Heart left ventricle (tissue), 16 donors: ENCODE measurements at regions of chr12 and their contacts with region 1.

Region 1: DNA sequence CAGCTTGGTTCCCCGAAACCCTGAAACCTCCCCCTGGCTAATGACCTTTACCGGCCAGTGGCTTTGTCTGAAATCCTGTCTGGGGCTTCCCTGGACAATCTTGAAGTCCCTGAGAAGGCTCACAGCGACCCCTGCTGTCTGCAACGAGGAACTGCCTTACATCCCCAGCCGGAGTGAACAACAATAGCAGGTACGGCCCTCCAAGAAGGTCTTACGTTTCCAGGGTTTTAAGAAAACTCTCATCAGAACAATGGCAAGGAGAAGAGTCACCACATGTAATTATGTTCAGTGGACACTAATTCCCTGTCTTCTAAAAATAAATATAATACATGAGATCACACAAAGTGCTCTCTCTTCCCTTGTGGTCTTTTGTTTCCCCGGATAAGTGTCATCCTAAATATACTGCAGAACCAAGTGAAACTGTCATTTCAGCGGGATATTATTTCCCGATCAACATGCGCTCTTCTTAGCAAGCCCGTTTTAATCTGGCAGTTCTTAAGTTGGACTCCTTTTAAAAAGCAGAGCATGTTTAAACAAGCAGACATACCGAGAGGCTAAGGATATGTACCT is 53.3 kb downstream of the RBM19 start:
- DNase-seq: peak in 4 of 5 donors; percentile 46 to 59 (median 52)
- ATAC-seq: peak in 3 of 4 donors; percentile 59 to 81 (median 74)
- H3K4me3 ChIP-seq: no peak overlapping the region
- H3K27ac ChIP-seq: no peak overlapping the region
- H3K4me1 ChIP-seq: no peaks in the 10 kb centered on the region
- H3K27me3 ChIP-seq: no peaks in the 10 kb centered on the region
- CTCF ChIP-seq: peak; percentile 59 to 88 (median 82)
- POLR2A ChIP-seq: no peak

Region 2: DNA sequence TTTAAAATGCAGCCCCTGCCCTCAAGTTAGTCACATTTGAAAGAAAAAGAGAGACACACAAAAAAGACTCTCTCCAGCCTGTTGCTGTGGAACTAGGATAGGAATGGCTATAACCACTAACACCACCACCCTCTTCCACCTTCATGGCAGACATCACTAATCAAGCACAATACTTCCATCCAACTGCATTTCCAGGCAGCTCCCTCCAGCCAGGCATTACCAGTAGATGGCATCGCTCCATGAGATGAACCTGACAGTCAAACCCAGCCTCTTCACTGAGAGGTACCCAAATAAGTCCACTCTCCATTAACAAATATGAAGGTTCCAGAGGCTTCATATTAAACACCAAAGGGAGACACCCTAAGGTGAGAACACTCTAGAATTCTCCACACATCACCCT is 602.4 kb before region 1 on chr12:
- intact Hi-C with region 1: loop called in 3 of 10 experiments (anchors 5 to 10 kb)
- DNase-seq: no peak
- ATAC-seq: no peak
- H3K4me3 ChIP-seq: no peak overlapping the region
- H3K27ac ChIP-seq: no peak overlapping the region
- H3K4me1 ChIP-seq: peaks cover 0 to 4% (median 0%) of the 10 kb centered on the region in 12 donors
- H3K27me3 ChIP-seq: no peaks in the 10 kb centered on the region
- CTCF ChIP-seq: no peak
- POLR2A ChIP-seq: no peak

Region 3: DNA sequence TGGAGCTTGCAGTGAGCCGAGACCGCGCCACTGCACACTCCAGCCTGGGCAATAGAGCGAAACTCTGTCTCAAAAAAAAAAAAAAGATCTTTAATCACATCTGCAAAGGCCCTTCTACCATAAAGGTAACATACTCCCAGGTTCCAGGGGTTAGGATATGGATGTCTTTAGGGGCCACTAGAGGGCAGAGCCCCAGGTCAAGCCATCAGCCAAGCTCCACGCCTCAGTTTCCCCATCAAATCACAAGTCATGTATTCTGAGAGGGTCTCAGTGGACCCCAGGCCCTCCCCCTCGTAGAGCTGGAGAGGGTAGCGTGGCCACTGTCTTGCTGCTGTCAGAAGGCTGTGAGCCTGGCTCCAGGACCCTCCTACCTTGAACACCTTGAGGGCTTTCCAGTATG is 596.7 kb before region 1 on chr12:
- intact Hi-C with region 1: loop called in 3 of 10 experiments (anchors 5 to 10 kb)
- DNase-seq: no peak
- ATAC-seq: no peak
- H3K4me3 ChIP-seq: no peak overlapping the region
- H3K27ac ChIP-seq: no peak overlapping the region
- H3K4me1 ChIP-seq: peaks cover 0 to 4% (median 0%) of the 10 kb centered on the region in 12 donors
- H3K27me3 ChIP-seq: no peaks in the 10 kb centered on the region
- CTCF ChIP-seq: no peak
- POLR2A ChIP-seq: no peak

Region 4: GRCh38 chr12:113439606-113440030 is 473.2 kb before region 1 on chr12:
- intact Hi-C with region 1: loop called in 3 of 10 experiments (anchors 2 to 10 kb)
- DNase-seq: no peak
- ATAC-seq: peak in 3 of 4 donors; percentile 34 to 59 (median 38)
- H3K4me3 ChIP-seq: no peak overlapping the region
- H3K27ac ChIP-seq: no peak overlapping the region
- H3K4me1 ChIP-seq: no peaks in the 10 kb centered on the region
- H3K27me3 ChIP-seq: peaks cover 0 to 42% (median 4%) of the 10 kb centered on the region in 9 donors
- CTCF ChIP-seq: peak; percentile 41 to 66 (median 58)
- POLR2A ChIP-seq: no peak

Region 5: GRCh38 chr12:113462117-113462774 is 450.6 kb before region 1 on chr12:
- intact Hi-C with region 1: loop called in 9 of 10 experiments (anchors 1 to 5 kb)
- DNase-seq: peak; percentile 69 to 87 (median 76)
- ATAC-seq: peak; percentile 55 to 92 (median 86)
- H3K4me3 ChIP-seq: peak overlapping the region in 9 of 12 donors; percentile 20 to 36 (median 31)
- H3K27ac ChIP-seq: no peak overlapping the region
- H3K4me1 ChIP-seq: peaks cover 0 to 45% (median 28%) of the 10 kb centered on the region in 12 donors
- H3K27me3 ChIP-seq: peaks cover 46 to 92% (median 67%) of the 10 kb centered on the region in 9 donors
- CTCF ChIP-seq: peak; percentile 71 to 90 (median 81)
- POLR2A ChIP-seq: no peak

Region 6: GRCh38 chr12:113990250-113991223 is 77.7 kb after region 1 on chr12:
- intact Hi-C with region 1: no loop called
- DNase-seq: no peak
- ATAC-seq: no peak
- H3K4me3 ChIP-seq: no peak overlapping the region
- H3K27ac ChIP-seq: no peak overlapping the region
- H3K4me1 ChIP-seq: no peaks in the 10 kb centered on the region
- H3K27me3 ChIP-seq: peaks cover 0 to 45% (median 11%) of the 10 kb centered on the region in 9 donors
- CTCF ChIP-seq: no peak
- POLR2A ChIP-seq: no peak